ENCODE measurements at regions of chr21 and their contacts with region 1.

Region 1: DNA sequence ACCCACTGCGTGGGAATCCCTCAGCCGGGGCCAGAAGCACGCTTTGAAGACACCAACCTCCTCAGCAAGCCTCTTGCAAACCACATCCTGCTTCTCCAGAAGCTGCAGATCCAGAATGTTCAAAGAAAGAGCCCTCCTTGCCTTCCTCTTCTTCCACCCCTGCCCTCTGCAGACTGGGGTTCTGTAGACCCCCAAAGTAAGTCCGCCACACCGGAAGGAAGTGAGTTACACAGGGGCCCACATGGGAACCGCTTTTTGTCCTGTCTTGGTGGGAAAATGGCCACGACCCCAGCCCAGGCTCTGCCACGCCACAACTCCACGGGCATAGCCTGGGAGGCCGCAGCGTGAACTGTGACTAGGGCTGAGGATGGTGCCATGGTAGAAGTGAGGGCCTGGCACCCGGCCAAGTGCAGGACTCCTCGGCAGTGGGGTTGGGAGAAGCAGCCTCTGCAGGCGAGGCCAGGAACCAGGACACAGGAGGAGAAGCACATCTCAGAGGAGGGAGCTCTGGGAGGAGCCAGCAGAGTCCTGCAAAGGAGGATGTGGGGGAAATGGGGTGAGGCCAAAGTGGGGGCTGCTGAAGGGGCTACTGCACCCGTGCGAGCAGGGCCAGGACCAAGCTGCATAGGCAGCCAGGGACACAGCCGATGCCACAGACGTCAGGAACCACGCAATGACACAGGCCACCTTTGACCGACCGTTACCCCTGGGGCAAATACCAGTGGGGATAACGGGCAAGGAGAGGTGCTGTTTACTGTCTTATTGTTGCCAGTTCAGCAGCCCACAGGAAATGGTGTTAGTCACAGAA is 30.9 kb downstream of the PDE9A start:
- DNase-seq: peak; percentile 26 to 72 (median 59)
- ATAC-seq: peak; percentile 61
- H3K4me3 ChIP-seq: peak overlapping the region; percentile 12
- H3K4me3 Mint-ChIP-seq: peak overlapping the region; percentile 79 to 94 (median 86)
- H3K27ac ChIP-seq: peak overlapping the region; percentile 53
- H3K27ac Mint-ChIP-seq: peak overlapping the region; percentile 66 to 99 (median 92)
- H3K4me1 ChIP-seq: peaks cover 14 to 44% of the 10 kb centered on the region in 2 donors
- H3K4me1 Mint-ChIP-seq: peaks cover 35 to 59% (median 57%) of the 10 kb centered on the region in 7 donors
- H3K27me3 ChIP-seq: no peaks in the 10 kb centered on the region
- H3K27me3 Mint-ChIP-seq: no peaks in the 10 kb centered on the region

Region 2: DNA sequence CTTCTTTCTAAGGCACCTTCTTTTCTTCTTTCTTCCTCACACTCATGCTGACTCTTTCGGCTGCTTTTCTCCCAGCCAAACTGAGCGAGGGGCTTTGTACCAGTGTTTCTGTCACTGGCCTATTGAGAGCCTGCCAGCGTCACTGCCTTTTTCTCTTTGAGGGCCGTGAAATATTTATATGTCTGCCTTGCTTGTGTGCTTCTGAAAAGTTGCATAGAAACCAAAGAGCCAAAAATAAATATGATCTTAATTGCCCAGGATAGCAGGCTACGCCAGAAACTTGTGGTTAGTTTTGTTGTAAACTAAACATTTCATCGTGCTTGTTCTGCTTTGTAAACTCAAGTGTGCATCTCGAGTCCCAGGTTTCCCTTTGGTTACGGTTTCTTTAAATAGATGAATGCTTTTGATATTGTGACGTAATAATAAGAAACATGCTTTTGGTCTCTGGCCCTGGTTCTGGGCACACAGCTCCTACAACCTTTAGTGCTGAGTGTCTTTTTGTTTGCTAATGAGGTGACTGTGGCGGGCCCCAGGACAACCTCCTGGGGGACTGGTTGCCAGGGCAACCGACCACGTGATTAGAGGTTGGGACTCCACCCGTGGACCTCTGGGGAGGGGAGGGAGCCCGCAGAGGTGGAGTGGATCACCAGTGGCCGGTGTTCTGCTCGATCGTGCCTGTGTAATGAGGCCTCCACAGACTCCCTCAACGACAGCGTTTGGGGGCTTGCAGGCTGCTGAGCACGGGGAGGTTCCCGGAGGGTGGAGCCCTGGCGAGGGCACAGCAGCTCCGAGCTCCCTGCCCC is 159.8 kb before region 1 on chr21:
- CTCF ChIA-PET with region 1: no interaction called
- POLR2A ChIA-PET with region 1: no interaction called
- intact Hi-C with region 1: loop called in 1 of 2 experiments (anchors 5 kb)
- DNase-seq: peak in 3 of 9 donors; percentile 10 to 25 (median 20)
- ATAC-seq: peak; percentile 60
- H3K4me3 ChIP-seq: no peak overlapping the region
- H3K4me3 Mint-ChIP-seq: peak overlapping the region in 7 of 10 donors; percentile 20 to 52 (median 43)
- H3K27ac ChIP-seq: no peak overlapping the region
- H3K27ac Mint-ChIP-seq: peak overlapping the region in 8 of 9 donors; percentile 6 to 88 (median 56)
- H3K4me1 ChIP-seq: peaks cover 16 to 30% of the 10 kb centered on the region in 2 donors
- H3K4me1 Mint-ChIP-seq: peaks cover 39 to 64% (median 54%) of the 10 kb centered on the region in 7 donors
- H3K27me3 ChIP-seq: no peaks in the 10 kb centered on the region
- H3K27me3 Mint-ChIP-seq: no peaks in the 10 kb centered on the region

Region 3: GRCh38 chr21:42652527-42653230 is 31.6 kb before region 1 on chr21:
- CTCF ChIA-PET with region 1: no interaction called
- POLR2A ChIA-PET with region 1: interaction called, 5 read pairs
- intact Hi-C with region 1: loop called (anchors 2 kb)
- DNase-seq: no peak
- ATAC-seq: no peak
- H3K4me3 ChIP-seq: no peak overlapping the region
- H3K4me3 Mint-ChIP-seq: peak overlapping the region; percentile 68 to 88 (median 84)
- H3K27ac ChIP-seq: no peak overlapping the region
- H3K27ac Mint-ChIP-seq: peak overlapping the region in 8 of 9 donors; percentile 1 to 86 (median 68)
- H3K4me1 ChIP-seq: peaks cover 0 to 15% of the 10 kb centered on the region in 2 donors
- H3K4me1 Mint-ChIP-seq: peaks cover 17 to 29% (median 24%) of the 10 kb centered on the region in 7 donors
- H3K27me3 ChIP-seq: peaks cover 0 to 4% of the 10 kb centered on the region in 2 donors
- H3K27me3 Mint-ChIP-seq: peaks cover 0 to 50% (median 0%) of the 10 kb centered on the region in 5 donors

Region 4: GRCh38 chr21:42672699-42673458 is 11.4 kb before region 1 on chr21:
- CTCF ChIA-PET with region 1: no interaction called
- POLR2A ChIA-PET with region 1: no interaction called
- intact Hi-C with region 1: no loop called
- DNase-seq: no peak
- ATAC-seq: no peak
- H3K4me3 ChIP-seq: no peak overlapping the region
- H3K4me3 Mint-ChIP-seq: no peak overlapping the region
- H3K27ac ChIP-seq: no peak overlapping the region
- H3K27ac Mint-ChIP-seq: peak overlapping the region in 2 of 9 donors; percentile 26 to 39
- H3K4me1 ChIP-seq: peaks cover 0 to 9% of the 10 kb centered on the region in 2 donors
- H3K4me1 Mint-ChIP-seq: peaks cover 5 to 25% (median 13%) of the 10 kb centered on the region in 7 donors
- H3K27me3 ChIP-seq: no peaks in the 10 kb centered on the region
- H3K27me3 Mint-ChIP-seq: no peaks in the 10 kb centered on the region

Region 5: DNA sequence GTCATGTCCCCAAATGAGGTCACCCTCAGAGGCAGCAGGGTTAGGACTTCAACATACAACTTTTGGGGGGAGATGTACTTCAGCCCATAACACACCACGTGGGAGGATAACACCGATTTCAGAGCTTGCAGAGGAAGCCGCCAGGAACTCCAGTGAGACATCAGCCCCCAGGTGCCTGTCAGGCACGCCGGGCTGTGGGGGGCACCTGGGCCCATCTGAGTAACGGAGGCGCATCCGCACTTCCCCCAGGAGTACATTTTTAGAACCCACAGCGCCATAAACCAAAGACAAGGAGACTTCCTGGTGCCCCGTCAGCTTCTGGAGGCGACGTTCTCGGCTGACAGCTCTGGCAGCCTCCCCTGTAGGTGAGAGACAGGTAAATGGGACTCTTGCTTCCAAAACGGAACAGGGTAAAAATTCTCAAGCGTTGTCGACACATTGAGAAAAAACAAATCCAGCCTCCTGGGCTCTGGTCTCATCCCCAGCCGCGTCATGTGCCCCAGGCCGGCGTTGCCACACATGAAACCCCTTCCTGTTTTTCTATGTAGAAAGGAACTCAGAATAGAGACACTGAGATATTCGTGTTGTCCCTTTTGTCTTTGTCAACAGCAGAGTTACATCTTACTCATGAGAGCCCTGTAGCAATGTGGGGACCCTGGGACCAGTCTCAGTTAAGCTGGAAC is 62.4 kb after region 1 on chr21:
- CTCF ChIA-PET with region 1: no interaction called
- POLR2A ChIA-PET with region 1: interaction called, 10 read pairs
- intact Hi-C with region 1: loop called (anchors 2 kb)
- DNase-seq: peak; percentile 33 to 85 (median 77)
- ATAC-seq: peak; percentile 90
- H3K4me3 ChIP-seq: peak overlapping the region; percentile 36
- H3K4me3 Mint-ChIP-seq: peak overlapping the region; percentile 72 to 90 (median 80)
- H3K27ac ChIP-seq: peak overlapping the region; percentile 63
- H3K27ac Mint-ChIP-seq: peak overlapping the region; percentile 96 to 100 (median 98)
- H3K4me1 ChIP-seq: peaks cover 19 to 26% of the 10 kb centered on the region in 2 donors
- H3K4me1 Mint-ChIP-seq: peaks cover 18 to 46% (median 32%) of the 10 kb centered on the region in 7 donors
- H3K27me3 ChIP-seq: no peaks in the 10 kb centered on the region
- H3K27me3 Mint-ChIP-seq: no peaks in the 10 kb centered on the region

Region 6: DNA sequence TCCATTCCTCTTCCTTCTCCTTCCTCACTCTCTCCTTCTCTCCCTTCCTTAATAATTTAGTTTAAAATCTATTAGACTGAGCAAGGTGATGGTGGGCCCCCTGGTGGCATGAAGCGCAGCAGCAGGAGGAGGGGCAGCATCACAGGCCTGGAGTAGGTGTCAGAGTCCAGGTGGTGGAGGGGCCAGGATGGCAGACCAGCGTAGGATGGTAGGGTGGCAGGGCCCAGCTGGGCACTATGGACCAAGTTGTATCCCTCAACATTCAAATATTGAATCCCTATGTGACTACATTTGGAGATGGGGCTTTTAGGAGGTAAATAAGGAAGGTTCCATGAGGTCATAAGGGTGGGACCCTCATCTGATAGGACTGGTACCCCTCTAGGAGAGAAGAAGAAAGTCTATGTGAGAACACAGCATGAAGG is 134.0 kb after region 1 on chr21:
- CTCF ChIA-PET with region 1: interaction called, 3 read pairs
- POLR2A ChIA-PET with region 1: no interaction called
- intact Hi-C with region 1: loop called in 1 of 2 experiments (anchors 1 kb)
- DNase-seq: peak; percentile 24 to 70 (median 52)
- ATAC-seq: peak; percentile 85
- H3K4me3 ChIP-seq: no peak overlapping the region
- H3K4me3 Mint-ChIP-seq: no peak overlapping the region
- H3K27ac ChIP-seq: no peak overlapping the region
- H3K27ac Mint-ChIP-seq: peak overlapping the region in 6 of 9 donors; percentile 3 to 69 (median 26)
- H3K4me1 ChIP-seq: no peaks in the 10 kb centered on the region
- H3K4me1 Mint-ChIP-seq: peaks cover 0 to 6% (median 4%) of the 10 kb centered on the region in 7 donors
- H3K27me3 ChIP-seq: no peaks in the 10 kb centered on the region
- H3K27me3 Mint-ChIP-seq: peaks cover 0 to 7% (median 5%) of the 10 kb centered on the region in 5 donors